ENCODE measurements at regions of chr22 and their contacts with region 1.

Region 1: DNA sequence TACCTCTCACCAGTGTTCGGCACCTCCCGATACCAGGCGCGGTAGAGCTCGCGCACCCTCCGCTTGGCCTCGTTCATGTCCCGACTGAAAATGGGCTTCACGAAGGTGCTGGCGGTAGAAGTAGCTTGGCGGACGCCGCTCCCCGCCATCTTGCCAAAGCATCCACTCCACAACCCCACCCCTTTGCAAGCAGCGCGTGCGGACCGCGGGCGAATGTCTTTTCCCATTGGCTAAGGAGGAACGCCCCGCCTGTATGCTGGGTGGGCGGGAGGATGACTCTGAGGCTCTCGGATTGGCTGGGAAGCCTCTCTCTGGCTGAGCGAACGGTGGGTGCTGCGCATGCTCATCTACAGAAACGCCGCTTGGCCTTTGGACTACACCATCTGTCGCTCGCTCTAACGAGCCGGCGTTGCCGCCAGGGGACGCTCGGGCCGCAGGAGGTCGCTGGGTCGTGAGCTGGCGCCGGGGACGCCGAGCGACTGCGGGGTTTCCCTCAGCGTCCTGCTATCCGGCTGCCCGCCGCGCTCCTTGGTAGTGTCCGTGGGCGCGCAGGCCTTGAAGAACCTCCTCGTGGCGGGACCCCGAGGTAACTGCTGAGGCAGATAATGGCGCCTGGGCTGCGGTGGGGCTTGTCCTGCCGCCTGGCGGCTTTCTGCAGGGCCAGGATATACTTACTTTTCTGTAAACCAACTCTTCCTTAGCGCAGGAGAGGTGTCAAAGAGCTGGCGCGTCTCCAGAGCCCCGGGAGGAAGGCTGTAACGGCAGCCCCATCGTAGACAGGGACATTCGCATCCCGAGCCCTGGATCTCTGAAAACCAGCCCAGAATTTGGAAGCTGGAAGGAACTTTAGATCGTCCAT is at the start of gene NDUFA6:
- DNase-seq: peak; percentile 95 to 99 (median 97)
- ATAC-seq: peak; percentile 92
- H3K4me3 ChIP-seq: peak within 1 kb of the TSS; percentile 73 to 96
- H3K4me3 Mint-ChIP-seq: peak within 1 kb of the TSS; percentile 99
- H3K27ac ChIP-seq: peak within 1 kb of the TSS; percentile 94 to 95
- H3K27ac Mint-ChIP-seq: peak within 1 kb of the TSS; percentile 100
- H3K4me1 ChIP-seq: peaks cover 25% of the 10 kb centered on the region
- H3K4me1 Mint-ChIP-seq: peaks cover 43% of the 10 kb centered on the region
- H3K27me3 ChIP-seq: no peaks in the 10 kb centered on the region
- H3K27me3 Mint-ChIP-seq: no peaks in the 10 kb centered on the region
- CTCF ChIP-seq: peak; percentile 87
- total RNA-seq, gene NDUFA6: 55.5 to 59.7 TPM

Region 2: DNA sequence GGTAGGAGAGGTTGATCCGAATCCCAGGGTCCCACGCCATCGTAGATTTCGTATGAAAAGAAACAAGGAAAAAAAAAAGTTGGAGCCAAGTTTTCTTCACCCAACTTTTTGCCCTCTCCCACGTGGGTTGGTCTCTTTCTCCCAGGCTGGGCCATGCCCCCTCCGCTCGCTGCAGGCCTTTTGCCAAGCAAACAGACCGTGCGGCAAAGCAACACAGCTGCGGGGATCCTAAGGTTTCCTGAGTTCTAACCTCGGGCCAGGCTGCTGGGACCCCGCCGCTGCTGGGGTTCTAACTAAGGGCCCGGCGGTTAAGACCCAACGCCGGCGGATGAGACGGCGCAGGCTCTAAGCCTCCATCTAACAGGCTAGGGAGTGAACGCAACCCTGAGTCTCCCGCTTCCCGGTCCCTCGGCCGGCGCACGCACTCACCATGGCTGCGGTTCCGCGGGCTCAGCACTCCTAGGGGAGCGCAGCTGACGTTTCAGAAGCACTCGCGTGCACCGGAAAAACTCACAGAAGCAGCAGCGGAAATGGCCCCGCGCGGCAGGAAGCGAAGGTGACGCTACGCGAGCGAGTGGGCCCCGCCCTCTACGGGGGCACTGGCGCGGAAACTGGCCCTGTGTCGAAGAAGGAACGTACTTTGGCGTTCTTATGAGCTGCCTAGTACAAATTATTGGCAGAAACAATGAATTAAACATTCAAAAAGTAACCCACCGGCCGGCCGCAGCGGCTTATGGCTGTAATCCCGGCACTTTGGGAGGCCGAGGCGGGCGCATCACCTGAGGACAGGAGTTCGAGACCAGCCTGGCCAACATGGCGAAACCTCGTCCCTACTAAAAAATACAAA is 402.2 kb before region 1 on chr22 and contains the start of gene SNU13:
- CTCF ChIA-PET with region 1: no interaction called
- POLR2A ChIA-PET with region 1: no interaction called
- intact Hi-C with region 1: loop called in 1 of 2 experiments (anchors 5 kb)
- DNase-seq: peak; percentile 84 to 97 (median 93)
- ATAC-seq: peak; percentile 92
- H3K4me3 ChIP-seq: peak within 1 kb of the TSS; percentile 90 to 96
- H3K4me3 Mint-ChIP-seq: peak within 1 kb of the TSS; percentile 90
- H3K27ac ChIP-seq: peak within 1 kb of the TSS; percentile 97
- H3K27ac Mint-ChIP-seq: peak within 1 kb of the TSS; percentile 95
- H3K4me1 ChIP-seq: peaks cover 17% of the 10 kb centered on the region
- H3K4me1 Mint-ChIP-seq: peaks cover 30% of the 10 kb centered on the region
- H3K27me3 ChIP-seq: no peaks in the 10 kb centered on the region
- H3K27me3 Mint-ChIP-seq: no peaks in the 10 kb centered on the region
- CTCF ChIP-seq: no peak
- total RNA-seq, gene SNU13: 158 to 173 TPM

Region 3: GRCh38 chr22:42070517-42071422 is 20.1 kb before region 1 on chr22 and contains the start of gene NAGA:
- CTCF ChIA-PET with region 1: interaction called, 5 read pairs
- POLR2A ChIA-PET with region 1: interaction called, 3 read pairs
- intact Hi-C with region 1: loop called in 1 of 2 experiments (anchors 1 kb)
- DNase-seq: peak; percentile 75 to 96 (median 88)
- ATAC-seq: peak; percentile 98
- H3K4me3 ChIP-seq: peak within 1 kb of the TSS; percentile 89 to 97
- H3K4me3 Mint-ChIP-seq: peak within 1 kb of the TSS; percentile 88
- H3K27ac ChIP-seq: peak within 1 kb of the TSS; percentile 50 to 71
- H3K27ac Mint-ChIP-seq: peak within 1 kb of the TSS; percentile 86
- H3K4me1 ChIP-seq: peaks cover 23% of the 10 kb centered on the region
- H3K4me1 Mint-ChIP-seq: peaks cover 37% of the 10 kb centered on the region
- H3K27me3 ChIP-seq: no peaks in the 10 kb centered on the region
- H3K27me3 Mint-ChIP-seq: no peaks in the 10 kb centered on the region
- CTCF ChIP-seq: no peak
- total RNA-seq, gene NAGA: 1.8 to 2.0 TPM

Region 4: GRCh38 chr22:42111798-42112197 is 21.0 kb after region 1 on chr22:
- CTCF ChIA-PET with region 1: interaction called, 16 read pairs
- POLR2A ChIA-PET with region 1: interaction called, 4 read pairs
- intact Hi-C with region 1: no loop called
- DNase-seq: no peak
- ATAC-seq: no peak
- H3K4me3 ChIP-seq: no peak overlapping the region
- H3K4me3 Mint-ChIP-seq: no peak overlapping the region
- H3K27ac ChIP-seq: no peak overlapping the region
- H3K27ac Mint-ChIP-seq: no peak overlapping the region
- H3K4me1 ChIP-seq: no peaks in the 10 kb centered on the region
- H3K4me1 Mint-ChIP-seq: no peaks in the 10 kb centered on the region
- H3K27me3 ChIP-seq: no peaks in the 10 kb centered on the region
- H3K27me3 Mint-ChIP-seq: no peaks in the 10 kb centered on the region
- CTCF ChIP-seq: no peak

Region 5: DNA sequence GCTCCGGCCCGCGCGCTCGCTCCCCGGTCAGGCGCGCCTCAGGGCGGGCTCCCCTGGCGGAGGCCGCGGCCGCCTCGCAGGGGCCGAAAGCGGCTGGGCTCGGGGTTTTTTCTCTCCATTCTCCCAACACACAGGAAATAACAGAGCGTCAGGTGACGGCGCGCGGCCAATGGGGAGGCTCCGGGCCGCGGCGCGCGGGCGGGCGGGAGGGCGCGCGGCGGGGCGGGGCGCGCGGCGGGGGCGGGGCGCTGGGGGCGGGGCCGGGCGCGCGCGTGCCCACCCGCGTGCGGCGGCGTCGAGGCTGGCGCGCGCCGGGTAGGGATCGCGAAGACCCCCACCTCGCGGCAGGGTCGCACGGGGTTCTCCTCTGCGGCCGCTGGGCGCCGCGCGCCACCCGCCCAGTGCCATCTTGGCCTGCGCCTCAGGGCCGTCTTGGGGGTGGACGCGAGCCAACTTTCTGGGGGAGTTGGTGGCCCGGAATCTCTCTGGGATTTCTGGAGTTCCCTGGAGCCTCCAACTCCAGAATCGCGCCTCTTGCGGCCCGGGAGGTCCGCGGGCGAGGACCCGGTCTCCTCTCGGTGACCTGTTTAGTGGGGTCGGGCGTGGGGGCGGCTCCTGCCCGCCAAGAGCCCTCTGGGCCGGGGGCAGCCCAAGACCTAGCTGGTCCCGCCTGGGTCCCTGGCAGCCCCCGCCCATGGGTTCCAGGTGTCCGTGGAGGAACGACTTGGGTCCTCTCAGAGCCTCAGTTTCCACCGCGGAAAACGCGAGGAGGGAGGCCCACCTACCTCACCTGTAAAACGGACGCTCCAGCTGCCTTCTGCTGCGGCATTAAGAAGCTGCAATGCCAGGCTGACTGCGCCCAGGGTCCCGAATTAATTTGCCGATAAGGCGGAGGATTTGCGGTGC is 179.9 kb after region 1 on chr22 and contains the start of gene TCF20:
- CTCF ChIA-PET with region 1: no interaction called
- POLR2A ChIA-PET with region 1: interaction called, 4 read pairs
- intact Hi-C with region 1: loop called (anchors 5 kb)
- DNase-seq: peak; percentile 53 to 92 (median 78)
- ATAC-seq: peak; percentile 78
- H3K4me3 ChIP-seq: peak within 1 kb of the TSS; percentile 82 to 95
- H3K4me3 Mint-ChIP-seq: peak within 1 kb of the TSS; percentile 85
- H3K27ac ChIP-seq: peak within 1 kb of the TSS; percentile 73 to 74
- H3K27ac Mint-ChIP-seq: peak within 1 kb of the TSS; percentile 87
- H3K4me1 ChIP-seq: peaks cover 21% of the 10 kb centered on the region
- H3K4me1 Mint-ChIP-seq: peaks cover 29% of the 10 kb centered on the region
- H3K27me3 ChIP-seq: no peaks in the 10 kb centered on the region
- H3K27me3 Mint-ChIP-seq: no peaks in the 10 kb centered on the region
- CTCF ChIP-seq: no peak
- total RNA-seq, gene TCF20: 50.7 to 60.6 TPM

Region 6: GRCh38 chr22:42437488-42438292 is 346.9 kb after region 1 on chr22:
- CTCF ChIA-PET with region 1: interaction called, 39 read pairs
- POLR2A ChIA-PET with region 1: interaction called, 16 read pairs
- intact Hi-C with region 1: loop called in 1 of 2 experiments (anchors 1 kb)
- DNase-seq: peak; percentile 68 to 95 (median 86)
- ATAC-seq: peak; percentile 98
- H3K4me3 ChIP-seq: peak overlapping the region; percentile 40 to 52
- H3K4me3 Mint-ChIP-seq: peak overlapping the region; percentile 74
- H3K27ac ChIP-seq: no peak overlapping the region
- H3K27ac Mint-ChIP-seq: no peak overlapping the region
- H3K4me1 ChIP-seq: peaks cover 6% of the 10 kb centered on the region
- H3K4me1 Mint-ChIP-seq: peaks cover 7% of the 10 kb centered on the region
- H3K27me3 ChIP-seq: no peaks in the 10 kb centered on the region
- H3K27me3 Mint-ChIP-seq: no peaks in the 10 kb centered on the region
- CTCF ChIP-seq: peak; percentile 96

Region 7: GRCh38 chr22:43014869-43015676 is 924.2 kb after region 1 on chr22 and contains the start of gene PACSIN2:
- CTCF ChIA-PET with region 1: no interaction called
- POLR2A ChIA-PET with region 1: no interaction called
- intact Hi-C with region 1: loop called in 1 of 2 experiments (anchors 10 kb)
- DNase-seq: peak; percentile 98 to 99 (median 98)
- ATAC-seq: peak; percentile 98
- H3K4me3 ChIP-seq: peak within 1 kb of the TSS; percentile 79 to 85
- H3K4me3 Mint-ChIP-seq: peak within 1 kb of the TSS; percentile 98
- H3K27ac ChIP-seq: peak within 1 kb of the TSS; percentile 73 to 76
- H3K27ac Mint-ChIP-seq: peak within 1 kb of the TSS; percentile 97
- H3K4me1 ChIP-seq: peaks cover 14% of the 10 kb centered on the region
- H3K4me1 Mint-ChIP-seq: peaks cover 33% of the 10 kb centered on the region
- H3K27me3 ChIP-seq: no peaks in the 10 kb centered on the region
- H3K27me3 Mint-ChIP-seq: no peaks in the 10 kb centered on the region
- CTCF ChIP-seq: no peak
- total RNA-seq, gene PACSIN2: 16.8 to 18.5 TPM